ENCODE measurements at regions of chr3 and their contacts with region 1.

Region 1: DNA sequence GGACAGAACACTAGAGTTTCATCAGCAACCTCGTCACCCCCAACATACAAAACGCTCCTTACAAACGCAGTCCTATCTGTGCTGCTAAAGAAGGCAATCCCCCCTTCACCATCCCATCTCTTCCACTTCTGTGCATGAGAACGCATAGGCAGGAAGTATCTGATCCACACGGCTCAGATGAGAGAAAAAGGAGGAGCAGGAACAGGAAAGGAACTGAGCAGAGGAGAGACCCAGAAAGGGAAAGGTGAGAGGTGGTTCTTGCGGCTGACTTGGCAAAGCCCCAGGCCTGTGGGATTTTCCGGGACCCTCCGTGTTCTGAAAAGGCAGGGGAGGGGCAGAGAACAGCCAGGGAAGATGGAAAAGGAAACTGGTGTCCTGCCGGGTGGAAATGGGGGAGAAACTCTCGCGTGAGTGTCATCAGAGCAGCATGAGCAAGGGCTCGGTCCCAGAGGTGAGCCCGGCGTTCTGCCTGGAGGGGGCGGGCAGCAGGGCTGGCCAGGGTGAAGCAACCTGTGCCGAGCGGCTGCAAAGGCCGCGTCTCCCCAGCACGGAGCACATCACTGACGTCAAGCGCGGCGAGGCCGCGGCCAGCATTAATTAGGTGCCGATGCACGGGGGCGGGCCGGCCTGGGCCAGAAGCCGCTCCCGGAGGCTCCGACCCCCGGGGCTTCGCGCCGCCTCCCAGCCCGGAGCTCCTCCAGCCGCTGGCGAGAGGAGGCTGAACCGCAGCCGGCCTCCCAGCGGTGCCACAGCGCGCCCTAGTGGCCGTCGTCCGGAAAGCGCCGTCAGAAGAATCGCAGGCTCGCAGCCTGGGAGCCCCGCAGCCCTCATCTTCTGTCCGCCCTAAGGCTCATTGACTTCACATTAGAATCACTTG is 35.8 kb downstream of the CPN2 start:
- DNase-seq: peak; percentile 80 to 97 (median 90)
- ATAC-seq: peak; percentile 93
- H3K4me3 ChIP-seq: peak overlapping the region; percentile 35 to 47
- H3K27ac ChIP-seq: peak overlapping the region; percentile 38 to 46
- H3K4me1 ChIP-seq: peaks cover 4 to 15% of the 10 kb centered on the region in 2 donors
- H3K27me3 ChIP-seq: peaks cover 0 to 58% of the 10 kb centered on the region in 2 donors
- CTCF ChIP-seq: peak; percentile 91 to 96

Region 2: GRCh38 chr3:193665370-193665989 is 649.8 kb before region 1 on chr3:
- intact Hi-C with region 1: loop called in 1 of 2 experiments (anchors 10 kb)
- DNase-seq: peak in 2 of 4 donors; percentile 34 to 43
- ATAC-seq: no peak
- H3K4me3 ChIP-seq: no peak overlapping the region
- H3K27ac ChIP-seq: no peak overlapping the region
- H3K4me1 ChIP-seq: no peaks in the 10 kb centered on the region
- H3K27me3 ChIP-seq: no peaks in the 10 kb centered on the region
- CTCF ChIP-seq: peak in 1 of 2 donors; percentile 34

Region 3: GRCh38 chr3:193780810-193781472 is 534.4 kb before region 1 on chr3:
- intact Hi-C with region 1: loop called (anchors 5 to 10 kb)
- DNase-seq: peak in 3 of 4 donors; percentile 66 to 88 (median 72)
- ATAC-seq: peak; percentile 89
- H3K4me3 ChIP-seq: no peak overlapping the region
- H3K27ac ChIP-seq: no peak overlapping the region
- H3K4me1 ChIP-seq: peaks cover 6 to 11% of the 10 kb centered on the region in 2 donors
- H3K27me3 ChIP-seq: peaks cover 6 to 44% of the 10 kb centered on the region in 2 donors
- CTCF ChIP-seq: peak; percentile 65 to 73